Right ventricle myocardium superior (tissue), 1 donor: ENCODE measurements at regions of chr2 and their contacts with region 1.

Region 1: DNA sequence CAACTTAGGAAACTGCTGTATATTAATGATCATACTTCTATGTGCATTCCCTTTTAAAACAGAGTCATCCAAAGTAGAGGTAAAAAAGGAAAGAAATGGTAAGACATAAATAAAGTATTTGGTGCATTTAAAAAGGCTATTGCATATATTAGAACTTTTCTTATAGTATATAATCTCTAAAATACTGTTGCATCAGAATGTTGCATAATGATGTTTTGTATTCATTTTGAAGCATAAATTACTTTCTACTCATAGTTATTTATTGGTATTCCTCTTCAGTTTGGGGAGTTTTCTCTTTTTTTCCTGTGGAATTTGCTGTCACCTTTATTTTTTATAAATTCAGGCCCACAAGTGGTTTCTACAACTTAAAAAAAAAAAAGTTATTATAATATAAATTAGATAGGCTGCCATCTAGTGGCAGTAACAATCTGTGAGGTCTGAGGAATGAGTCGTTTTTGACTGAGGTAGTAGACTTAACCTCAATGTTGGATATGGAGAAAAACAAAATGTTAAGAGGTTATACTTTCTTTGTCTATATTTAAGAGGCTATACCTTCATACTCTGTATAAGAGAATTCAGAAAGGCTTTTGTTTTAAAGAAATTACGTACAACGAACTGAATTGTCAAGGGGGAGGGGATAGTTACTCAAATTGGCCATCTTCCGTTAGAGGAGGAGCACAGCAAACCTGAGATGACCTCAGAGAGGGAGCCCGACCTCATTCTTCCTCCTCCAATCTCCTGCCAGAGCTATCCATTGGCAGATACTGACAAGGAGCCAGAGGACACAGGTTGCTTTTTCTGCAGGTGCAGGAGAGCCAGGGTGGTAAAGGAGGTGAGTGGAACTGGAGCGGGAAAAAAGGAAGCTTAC is 23.8 kb downstream of the ANKAR start:
- DNase-seq: no peak
- ATAC-seq: peak; percentile 71

Region 2: DNA sequence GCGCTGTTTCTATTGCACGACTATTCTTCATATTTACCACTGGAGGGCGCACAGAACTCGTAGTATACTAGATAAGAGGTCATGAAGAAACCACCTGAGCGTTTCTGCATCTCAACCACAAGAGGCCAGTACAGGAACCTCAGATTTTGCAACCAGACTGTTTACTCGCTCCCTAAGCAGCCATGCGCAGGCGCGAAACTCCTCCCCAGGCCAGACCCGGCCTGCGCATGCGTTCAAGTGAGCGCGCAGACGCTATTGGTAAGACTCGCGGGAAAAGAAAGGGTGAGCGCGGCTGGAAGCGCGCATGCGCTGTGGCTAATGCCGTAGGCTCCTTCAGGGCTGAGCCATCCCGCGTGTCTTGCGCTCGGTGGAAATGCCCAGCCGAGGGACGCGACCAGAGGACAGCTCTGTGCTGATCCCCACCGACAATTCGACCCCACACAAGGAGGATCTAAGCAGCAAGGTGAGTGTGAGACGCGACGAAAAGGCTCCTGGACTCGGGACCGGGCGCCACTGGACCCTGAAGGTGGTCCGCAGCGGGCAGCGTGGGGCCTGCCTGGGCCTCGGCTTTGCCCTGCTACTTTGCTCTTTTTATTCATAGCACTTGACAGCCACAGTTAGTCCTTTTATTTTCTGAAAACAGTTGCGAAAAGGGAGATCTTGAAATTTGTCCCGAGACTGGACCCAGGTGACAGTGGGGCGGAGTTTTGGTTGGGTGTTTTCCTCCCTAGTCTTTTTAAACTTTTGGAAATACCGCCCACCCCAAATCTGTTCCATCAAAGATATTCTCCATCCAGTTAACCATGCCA is 36.9 kb before region 1 on chr2 and contains the start of gene ASNSD1:
- intact Hi-C with region 1: loop called (anchors 2 kb)
- DNase-seq: peak; percentile 100
- ATAC-seq: peak; percentile 98
- total RNA-seq, gene ASNSD1: 37.9 TPM

Region 3: GRCh38 chr2:189937691-189938090 is 239.4 kb after region 1 on chr2:
- intact Hi-C with region 1: no loop called
- DNase-seq: no peak
- ATAC-seq: no peak